Breast epithelium (tissue), 4 donors: ENCODE measurements at regions of chr9 and their contacts with region 1.

Region 1: DNA sequence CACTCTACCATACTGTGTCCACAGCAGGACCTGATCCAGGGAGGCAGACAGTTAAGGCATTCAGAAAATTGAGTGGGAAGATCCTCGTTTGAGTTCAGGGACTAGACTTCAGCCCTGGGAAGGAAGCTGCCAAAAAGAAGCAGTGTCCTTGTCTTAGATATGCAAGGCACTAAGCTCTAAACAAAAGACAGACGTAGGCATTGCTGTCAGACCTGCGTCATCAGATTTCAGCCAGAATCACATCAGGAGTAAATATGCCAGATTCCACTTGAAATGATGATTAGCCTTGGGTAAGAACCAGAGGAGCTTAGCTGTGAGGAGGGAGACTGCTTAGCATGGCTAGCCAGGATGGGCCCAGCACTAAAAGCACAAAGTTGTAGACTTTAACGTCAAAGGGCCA is 56.7 kb downstream of the MAMDC2 start:
- DNase-seq: no peak
- H3K4me3 ChIP-seq: no peak overlapping the region
- H3K27ac ChIP-seq: no peak overlapping the region
- H3K4me1 ChIP-seq: no peaks in the 10 kb centered on the region
- H3K27me3 ChIP-seq: no peaks in the 10 kb centered on the region
- CTCF ChIP-seq: no peak
- POLR2A ChIP-seq: no peak

Region 2: GRCh38 chr9:70049672-70050271 is 50.6 kb before region 1 on chr9:
- intact Hi-C with region 1: loop called (anchors 2 kb)
- DNase-seq: peak in 1 of 2 donors; percentile 81
- H3K4me3 ChIP-seq: peak overlapping the region in 1 of 3 donors; percentile 33
- H3K27ac ChIP-seq: peak overlapping the region; percentile 82 to 90
- H3K4me1 ChIP-seq: peaks cover 6 to 32% of the 10 kb centered on the region in 2 donors
- H3K27me3 ChIP-seq: no peaks in the 10 kb centered on the region
- CTCF ChIP-seq: no peak
- POLR2A ChIP-seq: no peak